ENCODE measurements at regions of chr19 and their contacts with region 1.

Region 1: DNA sequence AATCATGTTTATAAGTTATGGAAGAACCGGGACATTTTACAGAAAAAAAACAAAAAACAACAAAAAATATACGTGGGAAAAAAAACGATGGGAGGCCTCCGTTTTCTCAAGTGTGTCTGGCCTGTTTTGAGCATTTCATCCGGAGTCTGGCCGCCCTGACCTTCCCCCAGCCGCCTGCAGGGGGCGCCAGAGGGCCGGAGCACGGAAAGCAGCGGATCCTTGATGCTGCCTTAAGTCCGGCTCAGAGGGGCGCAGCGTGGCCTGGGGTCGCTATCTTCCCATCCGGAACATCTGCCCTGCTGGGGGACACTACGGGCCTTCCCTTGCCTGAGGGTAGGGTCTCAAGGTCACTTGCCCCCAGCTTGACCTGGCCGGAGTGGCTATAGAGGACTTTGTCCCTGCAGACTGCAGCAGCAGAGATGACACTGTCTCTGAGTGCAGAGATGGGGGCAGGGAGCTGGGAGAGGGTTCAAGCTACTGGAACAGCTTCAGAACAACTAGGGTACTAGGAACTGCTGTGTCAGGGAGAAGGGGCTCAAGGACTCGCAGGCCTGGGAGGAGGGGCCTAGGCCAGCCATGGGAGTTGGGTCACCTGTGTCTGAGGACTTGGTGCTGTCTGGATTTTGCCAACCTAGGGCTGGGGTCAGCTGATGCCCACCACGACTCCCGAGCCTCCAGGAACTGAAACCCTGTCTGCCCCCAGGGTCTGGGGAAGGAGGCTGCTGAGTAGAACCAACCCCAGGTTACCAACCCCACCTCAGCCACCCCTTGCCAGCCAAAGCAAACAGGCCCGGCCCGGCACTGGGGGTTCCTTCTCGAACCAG is 1.8 kb upstream of the APOE start:
- DNase-seq: peak; percentile 59 to 87 (median 65)
- ATAC-seq: peak; percentile 48 to 79 (median 68)
- H3K4me3 ChIP-seq: no peak overlapping the region
- H3K27ac ChIP-seq: no peak overlapping the region
- H3K4me1 ChIP-seq: peaks cover 0 to 23% (median 6%) of the 10 kb centered on the region in 12 donors
- H3K27me3 ChIP-seq: peaks cover 0 to 34% (median 15%) of the 10 kb centered on the region in 9 donors
- CTCF ChIP-seq: peak; percentile 94 to 100 (median 99)
- POLR2A ChIP-seq: no peak

Region 2: DNA sequence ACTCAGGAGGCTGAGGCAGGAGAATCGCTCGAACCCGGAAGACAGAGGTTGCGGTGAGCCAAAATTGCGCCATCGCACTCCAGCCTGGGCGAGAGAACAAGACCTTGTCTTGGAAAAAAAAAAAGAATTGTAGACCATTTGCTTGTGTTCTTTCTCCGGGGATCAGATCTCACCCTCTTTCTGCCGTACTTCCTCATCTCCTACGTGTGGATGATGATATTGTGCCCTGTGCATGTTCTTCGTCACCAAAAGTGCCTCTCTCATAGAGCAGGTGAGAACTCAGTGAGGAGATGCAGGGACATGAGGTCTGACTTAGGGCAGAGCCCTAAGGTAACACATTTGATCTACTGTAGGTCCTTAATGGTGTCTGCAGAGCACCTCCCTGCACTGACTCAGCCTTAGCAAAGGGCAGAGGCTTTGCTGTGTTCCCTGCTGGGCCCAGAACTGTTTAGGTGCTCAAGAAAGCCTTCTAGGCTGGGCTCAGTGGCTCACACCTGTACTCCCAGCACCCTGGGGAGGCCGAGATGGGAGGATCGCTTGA is 43.3 kb after region 1 on chr19:
- intact Hi-C with region 1: loop called (anchors 1 to 5 kb)
- DNase-seq: no peak
- ATAC-seq: no peak
- H3K4me3 ChIP-seq: no peak overlapping the region
- H3K27ac ChIP-seq: no peak overlapping the region
- H3K4me1 ChIP-seq: peaks cover 0 to 14% (median 8%) of the 10 kb centered on the region in 12 donors
- H3K27me3 ChIP-seq: no peaks in the 10 kb centered on the region
- CTCF ChIP-seq: no peak
- POLR2A ChIP-seq: no peak

Region 3: DNA sequence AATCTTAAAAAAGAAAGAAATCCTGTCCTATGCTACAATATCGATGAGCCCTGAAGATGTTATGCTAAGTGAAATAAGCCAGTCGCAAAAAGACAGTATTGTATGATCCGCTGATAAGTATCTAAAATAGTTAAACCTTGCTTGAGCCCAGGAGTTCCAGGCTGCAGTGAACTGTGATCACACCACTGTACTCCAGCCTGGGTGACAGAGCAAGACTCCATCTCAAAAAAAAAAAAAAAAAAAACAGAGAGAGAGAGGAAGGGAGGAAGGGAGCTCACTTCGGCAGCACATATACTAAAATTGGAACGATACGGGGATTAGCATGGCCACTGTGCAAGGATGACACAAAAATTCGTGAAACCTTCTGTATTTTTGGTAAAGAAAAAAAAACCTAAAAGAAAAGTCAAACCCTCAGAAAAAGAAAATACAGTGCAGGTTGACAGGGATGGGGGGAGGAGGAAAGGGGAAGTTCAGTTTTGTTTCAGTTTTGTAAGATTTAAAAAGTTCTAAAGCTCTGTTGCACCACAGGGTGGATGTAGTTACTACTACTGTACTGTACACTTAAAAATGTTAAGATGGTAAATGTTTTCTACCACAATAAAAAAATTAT is 143.5 kb after region 1 on chr19:
- intact Hi-C with region 1: loop called in 5 of 10 experiments (anchors 10 kb)
- DNase-seq: no peak
- ATAC-seq: no peak
- H3K4me3 ChIP-seq: peak overlapping the region in 1 of 12 donors; percentile 40
- H3K27ac ChIP-seq: peak overlapping the region in 1 of 12 donors; percentile 66
- H3K4me1 ChIP-seq: peaks cover 0 to 57% (median 38%) of the 10 kb centered on the region in 12 donors
- H3K27me3 ChIP-seq: no peaks in the 10 kb centered on the region
- CTCF ChIP-seq: no peak
- POLR2A ChIP-seq: no peak

Region 4: DNA sequence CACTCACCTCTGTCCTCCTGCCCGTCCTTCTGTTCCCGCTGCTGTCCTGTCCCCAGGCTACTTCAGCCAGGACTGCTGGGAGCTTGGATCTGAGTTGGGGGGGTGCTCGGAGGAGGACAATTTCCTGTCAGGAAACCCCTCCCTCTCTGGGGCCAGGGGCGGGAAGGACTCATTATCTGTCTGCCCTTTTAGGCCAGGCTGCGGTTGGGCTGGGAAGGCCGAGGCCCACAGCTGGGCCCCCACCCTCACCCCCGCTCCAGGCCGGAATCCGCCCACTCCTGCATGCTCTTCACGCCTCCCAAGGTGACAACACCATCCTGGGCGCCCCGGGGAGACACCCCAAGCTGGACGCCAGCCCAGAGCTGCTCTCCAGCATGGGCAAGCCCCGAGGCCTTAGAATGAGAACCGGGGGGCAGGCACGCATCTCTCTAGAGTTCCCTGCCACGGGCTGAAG is 341.5 kb after region 1 on chr19 and contains the start of gene EXOC3L2:
- intact Hi-C with region 1: loop called in 1 of 10 experiments (anchors 5 kb)
- DNase-seq: peak; percentile 43 to 71 (median 60)
- ATAC-seq: peak; percentile 33 to 82 (median 64)
- H3K4me3 ChIP-seq: peak within 1 kb of the TSS in 9 of 12 donors; percentile 8 to 50 (median 34)
- H3K27ac ChIP-seq: peak within 1 kb of the TSS in 10 of 12 donors; percentile 9 to 70 (median 57)
- H3K4me1 ChIP-seq: peaks cover 0 to 30% (median 8%) of the 10 kb centered on the region in 12 donors
- H3K27me3 ChIP-seq: no peaks in the 10 kb centered on the region
- CTCF ChIP-seq: no peak
- POLR2A ChIP-seq: no peak
- total RNA-seq, gene EXOC3L2: 0.32 to 2.5 (median 0.85) TPM

Region 5: GRCh38 chr19:45340232-45340898 is 436.6 kb after region 1 on chr19 and contains the start of gene KLC3:
- intact Hi-C with region 1: loop called in 6 of 10 experiments (anchors 5 to 10 kb)
- DNase-seq: no peak
- ATAC-seq: no peak
- H3K4me3 ChIP-seq: peak within 1 kb of the TSS in 9 of 12 donors; percentile 6 to 45 (median 22)
- H3K27ac ChIP-seq: no peak within 1 kb of the TSS
- H3K4me1 ChIP-seq: peaks cover 0 to 15% (median 1%) of the 10 kb centered on the region in 12 donors
- H3K27me3 ChIP-seq: peaks cover 10 to 23% (median 14%) of the 10 kb centered on the region in 9 donors
- CTCF ChIP-seq: no peak
- POLR2A ChIP-seq: no peak
- total RNA-seq, gene KLC3: 0.12 to 0.69 (median 0.30) TPM in 4 of 9 donors, not detected in the others

Measured in heart left ventricle (tissue), 16 donors.